Psoas muscle (tissue), 8 donors: ENCODE measurements at regions of chr4 and their contacts with region 1.

Region 1: DNA sequence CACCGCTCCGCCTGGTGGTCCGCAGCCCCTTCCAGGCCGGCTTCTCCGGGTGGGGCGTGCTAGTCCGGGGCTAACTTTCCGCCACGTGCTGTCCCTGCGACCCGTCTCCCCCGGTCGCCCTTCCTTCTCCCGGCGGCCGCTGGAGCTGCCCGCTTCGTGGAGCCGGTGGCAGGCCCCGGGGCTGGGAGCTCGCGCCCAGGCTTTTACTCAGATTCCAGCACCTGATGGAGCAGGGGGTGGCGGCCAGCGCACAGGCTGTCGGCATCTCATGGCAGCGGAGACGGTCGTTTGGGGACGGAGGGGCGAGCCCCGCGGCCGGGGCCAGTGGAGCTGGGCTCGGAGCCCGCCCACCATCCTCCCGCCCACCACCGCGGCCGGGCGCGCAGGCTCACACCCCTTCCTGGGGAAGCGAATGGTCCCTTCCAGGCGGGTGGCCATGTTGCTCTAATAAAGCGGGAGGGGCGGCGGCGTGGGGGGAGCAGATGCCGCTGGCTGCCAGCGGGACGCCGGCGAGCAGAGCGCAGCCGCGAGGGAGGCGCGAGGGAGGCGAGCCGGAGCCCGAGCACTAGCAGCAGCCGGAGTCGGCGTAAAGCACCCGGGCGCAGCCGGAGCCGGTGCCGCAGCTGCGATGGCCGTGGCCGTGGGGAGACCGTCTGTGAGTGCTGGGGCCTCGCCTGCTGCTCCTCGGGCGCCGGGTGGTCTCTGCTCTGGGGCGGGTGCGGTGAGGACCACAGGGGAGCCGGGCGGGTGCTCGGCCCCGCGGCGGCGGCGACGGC is at the start of gene SEPTIN11:
- DNase-seq: peak; percentile 95 to 96
- ATAC-seq: peak; percentile 90 to 91 (median 90)
- H3K4me3 ChIP-seq: peak within 1 kb of the TSS; percentile 92
- H3K27ac ChIP-seq: peak within 1 kb of the TSS; percentile 97
- H3K4me1 ChIP-seq: peaks cover 18% of the 10 kb centered on the region
- H3K27me3 ChIP-seq: no peaks in the 10 kb centered on the region
- CTCF ChIP-seq: no peak
- total RNA-seq, gene SEPTIN11: 20.9 to 54.0 (median 35.1) TPM

Region 2: DNA sequence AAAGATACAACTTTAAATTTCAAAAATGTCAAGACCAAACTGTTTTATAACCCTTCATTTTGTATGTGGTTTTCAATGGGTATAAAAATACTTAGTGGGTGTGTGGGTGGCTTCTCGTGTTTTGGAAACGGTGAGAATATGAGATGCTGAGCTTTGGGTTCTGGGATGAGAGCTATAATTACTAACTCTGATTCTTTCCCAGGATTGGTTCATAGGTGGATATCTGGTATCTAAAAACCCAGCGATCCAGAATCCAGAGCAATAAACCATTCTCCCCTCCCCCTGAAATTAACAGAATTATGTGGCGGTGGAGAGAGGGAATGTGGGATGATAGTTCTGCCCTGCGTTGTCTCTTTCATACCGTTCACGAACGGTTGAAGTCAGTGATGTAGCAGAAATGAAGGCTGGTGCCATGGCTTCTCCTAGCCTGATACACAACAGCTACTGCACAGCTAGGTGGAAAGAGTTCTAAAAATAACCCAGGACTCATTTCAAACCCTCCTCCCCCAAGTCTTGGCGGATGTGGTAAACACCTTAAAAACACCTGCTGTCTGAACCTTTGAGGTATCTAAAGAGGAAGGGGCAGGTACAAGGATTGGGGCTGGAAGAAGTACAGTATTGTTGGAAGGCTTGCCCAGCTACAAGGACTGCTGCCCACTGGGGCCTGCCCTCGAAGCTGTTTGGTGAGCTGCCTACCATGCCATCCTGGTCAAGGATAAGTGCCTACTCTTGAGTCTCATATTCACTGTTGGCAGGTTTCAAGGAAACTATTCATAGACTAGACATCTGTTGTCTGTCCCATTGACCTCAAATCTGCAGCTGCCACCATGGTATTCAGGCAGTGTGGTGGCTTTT is 44.5 kb after region 1 on chr4:
- intact Hi-C with region 1: loop called (anchors 1 to 5 kb)
- DNase-seq: peak in 1 of 2 donors; percentile 64
- ATAC-seq: peak; percentile 94 to 97 (median 95)
- H3K4me3 ChIP-seq: peak overlapping the region; percentile 42
- H3K27ac ChIP-seq: peak overlapping the region; percentile 93
- H3K4me1 ChIP-seq: peaks cover 20% of the 10 kb centered on the region
- H3K27me3 ChIP-seq: no peaks in the 10 kb centered on the region
- CTCF ChIP-seq: no peak

Region 3: DNA sequence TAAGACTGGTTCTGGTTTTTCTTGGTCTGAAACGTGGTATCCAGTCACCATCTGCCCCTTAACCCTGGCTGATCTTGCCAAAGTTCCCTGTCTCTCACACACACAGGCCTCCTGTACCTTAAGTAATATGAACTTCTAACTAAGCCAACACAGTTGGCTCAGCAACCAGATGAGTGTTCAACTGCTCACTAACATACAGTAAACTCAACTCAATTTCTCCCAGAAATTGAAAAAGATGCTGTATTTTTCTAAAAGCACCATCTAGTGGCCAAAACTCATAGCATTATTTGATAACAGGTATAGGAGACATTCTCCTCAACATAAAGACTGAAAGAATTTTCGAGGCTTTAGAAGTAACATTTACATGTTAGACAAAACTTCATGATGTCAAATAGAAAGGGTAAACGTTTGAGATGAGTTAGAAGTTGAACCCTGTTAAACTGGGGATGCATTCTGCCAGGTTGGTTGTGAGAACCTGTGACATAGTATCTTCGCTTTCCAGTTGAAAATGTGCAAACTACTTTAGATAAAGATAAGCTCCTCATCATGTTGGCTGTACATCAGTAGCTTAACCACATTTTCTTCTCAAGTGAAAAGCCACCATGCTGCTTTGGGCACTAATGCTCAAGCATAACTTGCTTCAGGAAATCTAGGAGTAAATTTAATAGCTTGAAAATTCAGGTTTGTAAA is 95.1 kb after region 1 on chr4:
- intact Hi-C with region 1: loop called in 1 of 2 experiments (anchors 10 kb)
- DNase-seq: no peak
- ATAC-seq: peak in 3 of 4 donors; percentile 19 to 55 (median 44)
- H3K4me3 ChIP-seq: no peak overlapping the region
- H3K27ac ChIP-seq: no peak overlapping the region
- H3K4me1 ChIP-seq: peaks cover 17% of the 10 kb centered on the region
- H3K27me3 ChIP-seq: no peaks in the 10 kb centered on the region
- CTCF ChIP-seq: peak; percentile 52

Region 4: DNA sequence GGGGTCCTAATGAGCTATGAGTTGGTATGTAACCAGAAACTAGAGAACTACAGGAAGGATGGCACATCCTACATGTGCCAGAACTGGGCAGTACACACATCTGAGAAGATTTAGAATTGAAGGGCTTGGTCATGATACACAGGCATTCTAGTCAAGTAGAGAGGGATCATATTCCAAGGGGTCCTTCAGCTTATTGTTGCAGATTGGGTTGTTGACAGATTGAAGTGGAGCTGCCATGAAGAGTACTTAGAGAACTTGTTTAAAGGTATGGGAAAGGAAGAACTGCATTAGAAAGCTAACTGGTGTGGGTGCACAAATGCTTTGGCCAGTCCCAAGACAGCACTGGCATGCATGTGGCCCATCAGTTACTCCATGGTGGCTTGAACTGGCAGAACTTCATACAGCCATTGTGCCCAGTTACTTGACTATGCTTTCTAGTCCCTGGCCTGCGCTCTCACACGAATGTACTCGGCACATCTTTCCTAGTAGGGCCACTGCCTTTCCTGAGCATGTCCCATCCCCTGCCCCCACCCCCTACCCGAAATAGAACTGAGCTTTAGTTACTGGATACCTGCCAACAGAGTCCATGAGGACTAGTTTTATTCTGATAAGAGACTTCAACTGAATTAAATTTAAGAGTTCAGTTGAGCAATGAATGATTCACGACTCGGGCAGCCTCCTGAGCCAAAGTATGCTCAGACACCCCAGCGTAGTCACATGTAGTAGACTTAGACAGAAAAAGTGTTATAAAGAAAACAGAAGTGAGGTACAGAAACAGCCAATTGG is 271.6 kb after region 1 on chr4:
- intact Hi-C with region 1: no loop called
- DNase-seq: no peak
- ATAC-seq: no peak
- H3K4me3 ChIP-seq: no peak overlapping the region
- H3K27ac ChIP-seq: no peak overlapping the region
- H3K4me1 ChIP-seq: no peaks in the 10 kb centered on the region
- H3K27me3 ChIP-seq: no peaks in the 10 kb centered on the region
- CTCF ChIP-seq: no peak